ENCODE measurements at regions of chr17 and their contacts with region 1.

Region 1: GRCh38 chr17:12709063-12709462 is 43.4 kb downstream of the MYOCD start:
- DNase-seq: no peak
- ATAC-seq: no peak
- H3K4me3 ChIP-seq: no peak overlapping the region
- H3K27ac ChIP-seq: no peak overlapping the region
- H3K4me1 ChIP-seq: no peaks in the 10 kb centered on the region
- H3K27me3 ChIP-seq: no peaks in the 10 kb centered on the region
- CTCF ChIP-seq: no peak

Region 2: GRCh38 chr17:12242345-12242954 is 466.6 kb before region 1 on chr17:
- CTCF ChIA-PET with region 1: no interaction called
- POLR2A ChIA-PET with region 1: interaction called, 11 read pairs
- in situ Hi-C with region 1: no loop called
- intact Hi-C with region 1: no loop called
- DNase-seq: no peak
- ATAC-seq: no peak
- H3K4me3 ChIP-seq: no peak overlapping the region
- H3K27ac ChIP-seq: no peak overlapping the region
- H3K4me1 ChIP-seq: no peaks in the 10 kb centered on the region
- H3K27me3 ChIP-seq: no peaks in the 10 kb centered on the region; the same call in 1 of the 2 replicates
- CTCF ChIP-seq: no peak

Region 3: DNA sequence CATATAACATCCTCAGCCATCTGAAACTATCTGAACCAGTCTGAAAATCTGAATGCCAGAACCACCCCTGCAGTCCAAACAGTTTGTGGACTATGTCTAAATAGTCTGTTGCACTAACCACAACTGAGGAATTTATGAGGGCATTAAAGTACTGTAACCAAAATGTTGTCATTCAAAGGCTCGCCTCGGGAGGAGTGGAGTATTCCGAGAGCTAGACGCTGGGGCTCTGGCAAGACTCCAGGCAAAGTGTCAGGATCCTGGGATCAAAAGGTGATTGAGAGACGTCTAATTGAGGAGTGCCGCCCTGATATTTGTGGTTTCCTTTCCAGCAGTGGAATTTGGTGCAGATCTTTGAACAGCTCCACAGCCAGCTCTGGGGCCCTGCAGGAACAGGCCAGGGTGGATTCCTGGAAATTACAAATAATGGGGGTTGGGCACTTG is 186.3 kb before region 1 on chr17:
- CTCF ChIA-PET with region 1: no interaction called
- POLR2A ChIA-PET with region 1: no interaction called
- in situ Hi-C with region 1: no loop called
- intact Hi-C with region 1: no loop called
- DNase-seq: no peak
- ATAC-seq: no peak
- H3K4me3 ChIP-seq: no peak overlapping the region
- H3K27ac ChIP-seq: no peak overlapping the region
- H3K4me1 ChIP-seq: no peaks in the 10 kb centered on the region
- H3K27me3 ChIP-seq: no peaks in the 10 kb centered on the region
- CTCF ChIP-seq: no peak

Measured in Panc1 (cell line).